ENCODE measurements at regions of chr12 and their contacts with region 1.

Region 1: GRCh38 chr12:25241167-25242020 is 9.3 kb downstream of the KRAS start:
- DNase-seq: no peak
- ATAC-seq: peak; percentile 49
- H3K4me3 Mint-ChIP-seq: no peak overlapping the region
- H3K27ac Mint-ChIP-seq: peak overlapping the region; percentile 3
- H3K4me1 Mint-ChIP-seq: peaks cover 31% of the 10 kb centered on the region
- H3K27me3 Mint-ChIP-seq: no peaks in the 10 kb centered on the region

Region 2: GRCh38 chr12:25264114-25264513 is 22.7 kb after region 1 on chr12:
- CTCF ChIA-PET with region 1: interaction called, 16 read pairs
- POLR2A ChIA-PET with region 1: no interaction called
- intact Hi-C with region 1: no loop called
- DNase-seq: no peak
- ATAC-seq: no peak
- H3K4me3 Mint-ChIP-seq: no peak overlapping the region
- H3K27ac Mint-ChIP-seq: no peak overlapping the region
- H3K4me1 Mint-ChIP-seq: no peaks in the 10 kb centered on the region
- H3K27me3 Mint-ChIP-seq: peaks cover 3% of the 10 kb centered on the region

Region 3: DNA sequence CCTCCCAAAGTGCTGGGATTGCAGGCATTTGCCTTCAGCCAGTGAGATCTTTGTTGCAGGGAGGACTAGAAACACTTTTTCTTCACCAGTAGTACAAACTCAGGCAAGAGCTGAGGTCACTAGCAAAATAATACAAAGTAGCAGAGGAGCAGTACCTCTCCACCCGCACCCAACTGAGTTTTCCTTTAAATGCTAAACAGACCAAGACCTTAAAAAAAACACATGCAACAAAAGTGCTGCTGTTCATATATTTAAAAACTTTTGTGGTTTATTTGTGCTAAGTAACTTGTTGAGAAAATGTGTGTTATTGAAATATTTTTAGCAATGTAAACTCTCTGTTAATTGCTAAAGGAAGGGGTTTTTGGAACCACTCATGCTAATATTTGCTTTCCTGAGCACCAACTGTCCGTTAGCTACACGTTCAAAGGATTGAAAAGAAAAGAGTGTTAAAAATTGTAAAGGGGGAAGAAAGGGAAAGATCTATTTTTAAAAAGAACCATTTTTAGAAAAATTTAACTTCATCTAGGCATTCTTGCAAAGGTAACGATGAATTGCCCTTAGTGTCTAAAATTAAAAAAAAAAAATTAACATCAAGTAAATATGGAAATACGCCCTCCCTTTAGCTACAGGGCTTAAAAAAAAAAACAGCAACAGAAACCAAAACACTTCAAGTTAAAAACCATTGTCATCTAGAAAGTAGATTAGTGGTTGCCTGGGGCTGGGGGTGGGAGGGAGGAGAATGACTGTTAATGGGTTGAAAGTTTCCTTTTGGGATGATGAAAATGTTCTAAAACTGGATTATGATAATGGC is 123.3 kb after region 1 on chr12:
- CTCF ChIA-PET with region 1: interaction called, 16 read pairs
- POLR2A ChIA-PET with region 1: no interaction called
- intact Hi-C with region 1: no loop called
- DNase-seq: peak; percentile 82
- ATAC-seq: peak; percentile 90
- H3K4me3 Mint-ChIP-seq: peak overlapping the region; percentile 31
- H3K27ac Mint-ChIP-seq: no peak overlapping the region
- H3K4me1 Mint-ChIP-seq: peaks cover 16% of the 10 kb centered on the region
- H3K27me3 Mint-ChIP-seq: peaks cover 15% of the 10 kb centered on the region

Region 4: DNA sequence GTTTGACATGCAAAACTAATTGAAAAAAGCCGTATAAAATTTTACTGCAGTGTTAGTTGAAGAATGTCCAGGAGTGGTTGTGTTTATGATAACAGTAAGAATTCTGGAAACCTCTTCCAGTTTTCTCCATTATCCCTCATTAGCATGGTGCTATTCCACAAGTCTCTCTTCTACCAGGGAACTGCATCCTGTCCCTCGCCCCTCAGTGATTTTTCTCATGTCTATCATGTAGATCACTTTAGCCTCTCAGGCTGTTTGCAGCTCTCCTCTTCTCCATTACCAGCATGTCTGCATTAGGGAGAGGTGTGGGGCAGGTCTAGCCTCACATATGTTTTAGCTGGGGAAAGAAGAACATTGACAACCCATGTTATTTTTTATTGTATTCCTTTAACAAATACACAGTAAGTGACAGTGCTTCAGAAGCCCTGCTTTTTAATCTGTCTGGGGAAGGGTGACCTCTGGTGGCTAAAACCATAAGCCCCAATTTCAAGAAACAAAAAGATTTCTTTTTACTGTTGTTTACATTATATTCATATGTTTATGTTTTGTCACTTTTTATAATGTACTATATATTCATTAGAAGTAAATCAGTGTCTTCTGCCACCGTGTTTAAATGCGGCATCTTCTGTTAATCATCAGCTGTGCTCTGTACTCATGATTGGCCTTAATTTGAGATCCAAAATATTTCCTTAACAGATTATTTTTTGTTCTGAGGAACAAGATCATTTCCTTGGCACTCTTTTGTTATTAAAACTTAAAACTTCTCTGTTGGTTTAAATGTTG is 787.8 kb after region 1 on chr12:
- CTCF ChIA-PET with region 1: no interaction called
- POLR2A ChIA-PET with region 1: no interaction called
- intact Hi-C with region 1: loop called in 1 of 2 experiments (anchors 2 kb)
- DNase-seq: peak; percentile 44
- ATAC-seq: no peak
- H3K4me3 Mint-ChIP-seq: no peak overlapping the region
- H3K27ac Mint-ChIP-seq: no peak overlapping the region
- H3K4me1 Mint-ChIP-seq: no peaks in the 10 kb centered on the region
- H3K27me3 Mint-ChIP-seq: peaks cover 2% of the 10 kb centered on the region

Measured in activated CD4-positive, alpha-beta T cell treated with anti-CD3 and anti-CD28 coated beads for 36 hours (primary cell).